Gastrocnemius medialis (tissue), 4 donors: ENCODE measurements at regions of chr16 and their contacts with region 1.

Region 1: DNA sequence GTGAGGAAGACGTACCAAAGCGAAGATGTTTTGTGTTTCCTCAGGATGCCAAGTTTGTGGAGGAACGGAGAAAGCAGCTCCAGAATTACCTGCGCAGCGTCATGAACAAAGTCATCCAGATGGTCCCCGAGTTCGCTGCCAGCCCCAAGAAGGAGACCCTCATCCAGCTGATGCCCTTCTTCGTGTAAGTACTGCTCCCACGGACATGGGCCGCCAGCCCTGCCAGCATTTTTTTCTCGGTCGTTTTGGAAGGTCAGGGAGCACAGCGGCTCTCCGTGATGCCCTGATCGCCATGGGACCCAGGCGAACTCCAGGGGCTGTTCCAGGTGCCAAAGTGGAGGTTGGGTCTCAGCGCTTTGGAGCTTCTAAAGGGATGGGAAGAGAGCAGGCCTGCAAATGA is 279.0 kb downstream of the CPPED1 start:
- DNase-seq: no peak
- ATAC-seq: no peak
- H3K4me3 ChIP-seq: no peak overlapping the region
- H3K27ac ChIP-seq: no peak overlapping the region
- H3K4me1 ChIP-seq: no peaks in the 10 kb centered on the region
- H3K27me3 ChIP-seq: no peaks in the 10 kb centered on the region
- CTCF ChIP-seq: no peak
- POLR2A ChIP-seq: no peak

Region 2: GRCh38 chr16:12535535-12536411 is 11.1 kb after region 1 on chr16:
- in situ Hi-C with region 1: no loop called
- intact Hi-C with region 1: loop called (anchors 1 kb)
- DNase-seq: no peak
- ATAC-seq: no peak
- H3K4me3 ChIP-seq: no peak overlapping the region
- H3K27ac ChIP-seq: no peak overlapping the region
- H3K4me1 ChIP-seq: no peaks in the 10 kb centered on the region
- H3K27me3 ChIP-seq: no peaks in the 10 kb centered on the region
- CTCF ChIP-seq: no peak
- POLR2A ChIP-seq: no peak